ENCODE measurements at regions of chr1 and their contacts with region 1.

Region 1: DNA sequence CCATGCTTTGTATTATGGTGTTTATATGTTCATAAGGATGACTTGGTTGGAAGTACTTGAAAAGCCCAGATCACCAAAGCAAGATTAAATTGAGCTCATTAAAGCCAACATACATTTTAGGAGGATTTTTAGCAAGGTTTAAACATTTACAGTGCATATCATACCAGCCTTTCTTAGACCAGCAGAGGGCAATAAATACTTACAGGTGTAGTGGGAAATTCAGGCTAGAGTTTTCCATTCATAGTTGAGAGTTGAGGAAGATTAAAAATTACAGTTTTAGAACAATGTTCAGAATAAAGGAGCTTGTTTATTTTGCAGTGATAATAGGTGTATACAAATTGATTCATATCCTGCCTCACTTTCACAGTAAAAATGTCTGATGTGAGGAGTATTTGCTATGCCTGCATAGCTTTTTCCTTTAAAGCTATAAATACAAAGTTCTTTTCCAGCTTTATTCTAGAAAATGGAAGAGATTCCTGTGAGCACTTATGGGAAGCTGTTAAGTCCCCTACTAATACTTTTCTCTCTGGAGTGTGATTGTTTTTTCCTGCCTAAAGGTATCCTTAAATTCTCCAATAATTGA is 35.3 kb downstream of the DTL start:
- DNase-seq: no peak
- ATAC-seq: peak; percentile 54

Region 2: GRCh38 chr1:212162635-212163034 is 91.8 kb after region 1 on chr1:
- intact Hi-C with region 1: loop called (anchors 1 kb)
- DNase-seq: no peak
- ATAC-seq: peak; percentile 53

Region 3: DNA sequence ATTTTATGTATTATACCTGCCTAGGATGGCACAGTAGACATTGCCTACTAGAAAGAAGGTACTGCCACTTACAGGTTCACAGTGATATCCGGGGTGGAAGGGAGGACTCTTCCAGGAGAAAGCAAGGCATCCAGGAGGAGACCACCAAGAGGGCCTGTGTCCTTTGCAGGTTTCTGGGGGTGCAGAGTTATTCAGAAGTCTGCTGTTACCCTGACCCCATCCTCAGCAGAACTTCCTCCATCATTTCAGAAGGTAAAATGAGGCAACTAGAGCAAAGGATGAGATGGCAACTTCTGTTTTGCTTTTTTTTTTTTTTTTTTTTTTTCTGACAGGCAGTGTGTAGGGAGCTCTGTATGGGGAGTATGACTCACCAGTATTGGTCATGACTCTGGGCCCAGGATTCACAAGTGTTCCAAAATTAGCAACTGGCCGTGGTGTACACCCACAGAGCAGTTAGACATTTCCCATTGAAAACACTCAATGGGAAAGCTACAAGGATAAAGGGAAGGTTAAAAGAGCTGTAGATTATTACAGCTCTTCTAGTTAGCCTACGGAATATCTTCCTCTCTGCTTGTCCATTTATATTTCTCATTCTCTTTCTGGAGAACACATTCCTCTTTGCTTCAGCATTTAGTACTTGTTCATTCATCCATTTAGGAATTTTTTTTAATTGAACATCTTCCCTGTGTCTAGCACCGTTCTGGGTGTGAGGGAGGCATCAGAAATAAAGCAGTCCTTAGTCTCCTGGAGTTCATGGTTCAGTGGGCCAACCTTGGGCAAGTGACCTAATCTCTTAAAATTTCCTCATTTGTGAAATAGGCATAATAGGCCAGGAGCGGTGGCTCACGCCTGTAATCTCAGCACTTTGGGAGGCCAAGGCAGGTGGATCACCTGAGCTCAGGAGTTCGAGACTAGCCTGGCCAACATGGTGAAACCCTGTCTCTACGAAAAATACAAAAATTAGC is 163.9 kb after region 1 on chr1:
- intact Hi-C with region 1: loop called (anchors 1 kb)
- DNase-seq: no peak
- ATAC-seq: peak; percentile 96

Region 4: DNA sequence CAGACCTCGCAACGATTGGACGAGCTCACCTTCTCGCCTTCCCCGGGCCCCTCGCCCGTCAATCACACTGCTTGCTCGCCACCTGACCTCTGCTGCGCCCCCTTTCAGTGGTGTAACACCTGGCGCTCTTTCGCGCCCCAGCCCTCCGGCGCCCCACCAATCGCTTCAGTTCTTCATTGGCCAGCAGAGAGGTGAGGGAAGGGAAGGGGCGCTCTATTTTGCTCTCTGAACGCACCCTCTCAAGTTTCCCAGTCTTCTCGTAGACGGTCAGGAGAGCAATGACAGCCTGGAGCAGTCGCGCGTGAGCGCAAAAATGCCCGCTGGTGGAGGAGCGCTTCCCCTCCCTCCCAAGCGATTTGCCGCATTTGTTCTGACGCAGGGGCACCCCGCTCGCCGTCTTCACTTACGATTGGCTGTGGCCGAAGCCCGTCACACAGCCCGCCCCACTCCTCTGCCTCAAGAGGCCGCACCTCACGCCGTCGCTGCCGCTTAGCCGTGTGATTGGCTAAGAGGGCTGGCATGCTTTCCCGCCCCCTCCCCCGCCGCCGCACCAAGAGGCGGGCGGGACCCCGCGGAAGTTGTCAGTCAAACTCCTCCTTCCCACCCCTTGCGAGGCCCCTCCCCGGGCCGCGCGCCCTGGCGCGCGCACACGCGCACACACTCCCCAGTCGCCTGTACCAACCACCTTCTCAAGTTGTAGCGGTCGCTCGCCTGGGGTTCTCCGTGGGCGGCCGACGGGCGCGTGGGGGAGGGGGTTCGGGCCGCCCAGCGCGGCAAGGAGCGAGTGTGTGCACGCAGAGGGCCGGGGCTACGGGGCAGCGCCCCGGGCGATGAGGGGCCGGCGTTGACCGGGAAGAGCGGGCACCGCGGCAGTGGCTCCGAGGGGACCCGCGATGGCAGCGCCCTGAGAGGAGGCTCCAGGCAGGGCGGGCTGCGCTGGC is 214.2 kb after region 1 on chr1 and contains the start of gene PPP2R5A:
- intact Hi-C with region 1: loop called (anchors 1 kb)
- DNase-seq: peak; percentile 100
- ATAC-seq: peak; percentile 98
- total RNA-seq, gene PPP2R5A: 80.8 TPM

Region 5: GRCh38 chr1:212291505-212292134 is 220.8 kb after region 1 on chr1:
- intact Hi-C with region 1: loop called (anchors 2 kb)
- DNase-seq: no peak
- ATAC-seq: peak; percentile 58

Region 6: GRCh38 chr1:212368073-212368484 is 297.3 kb after region 1 on chr1:
- intact Hi-C with region 1: loop called (anchors 2 kb)
- DNase-seq: no peak
- ATAC-seq: peak; percentile 76